Colonic mucosa (tissue), 4 donors: ENCODE measurements at regions of chr9 and their contacts with region 1.

Region 1: GRCh38 chr9:29475471-29475870 is 1902.2 kb upstream of the C9orf72 start:
- DNase-seq: no peak
- H3K4me3 ChIP-seq: no peak overlapping the region
- H3K27ac ChIP-seq: no peak overlapping the region
- H3K4me1 ChIP-seq: no peaks in the 10 kb centered on the region
- H3K27me3 ChIP-seq: no peaks in the 10 kb centered on the region
- CTCF ChIP-seq: no peak

Region 2: DNA sequence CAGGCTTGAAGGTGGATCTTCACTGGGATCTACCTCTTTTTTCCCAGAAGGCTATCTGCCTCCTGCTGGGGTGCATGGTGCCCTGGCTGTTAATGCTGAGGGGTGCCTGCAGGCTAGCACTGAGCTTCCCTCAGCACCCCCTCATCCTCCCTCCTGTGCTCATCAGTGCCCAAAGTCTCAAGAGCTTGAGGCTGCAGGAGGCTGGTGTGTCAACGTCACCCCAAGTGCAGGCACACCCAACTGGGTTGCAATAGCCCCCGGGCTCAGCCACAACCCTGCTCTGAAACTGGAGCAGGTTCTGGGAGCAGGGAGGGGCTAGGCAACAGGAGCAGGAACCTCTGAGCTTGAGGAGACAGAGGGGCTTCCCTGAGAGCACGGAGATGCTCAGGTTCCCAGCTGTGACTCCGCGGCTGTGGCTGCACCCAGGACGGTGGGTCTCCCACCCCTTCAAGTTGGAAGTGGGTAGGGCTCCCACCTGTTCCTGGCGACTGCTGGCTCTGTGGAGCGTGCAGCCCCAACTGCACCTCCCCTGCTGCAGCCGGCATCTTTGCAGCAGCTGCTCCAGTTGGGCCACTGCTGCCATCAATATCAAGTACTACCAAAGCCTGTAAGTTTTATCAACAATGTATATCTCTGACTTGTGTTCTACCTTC is 635.6 kb before region 1 on chr9:
- intact Hi-C with region 1: no loop called
- DNase-seq: no peak
- H3K4me3 ChIP-seq: no peak overlapping the region
- H3K27ac ChIP-seq: no peak overlapping the region
- H3K4me1 ChIP-seq: no peaks in the 10 kb centered on the region
- H3K27me3 ChIP-seq: no peaks in the 10 kb centered on the region
- CTCF ChIP-seq: no peak

Region 3: GRCh38 chr9:29183971-29184370 is 291.5 kb before region 1 on chr9:
- intact Hi-C with region 1: no loop called
- DNase-seq: no peak
- H3K4me3 ChIP-seq: no peak overlapping the region
- H3K27ac ChIP-seq: no peak overlapping the region
- H3K4me1 ChIP-seq: no peaks in the 10 kb centered on the region
- H3K27me3 ChIP-seq: no peaks in the 10 kb centered on the region
- CTCF ChIP-seq: no peak

Region 4: DNA sequence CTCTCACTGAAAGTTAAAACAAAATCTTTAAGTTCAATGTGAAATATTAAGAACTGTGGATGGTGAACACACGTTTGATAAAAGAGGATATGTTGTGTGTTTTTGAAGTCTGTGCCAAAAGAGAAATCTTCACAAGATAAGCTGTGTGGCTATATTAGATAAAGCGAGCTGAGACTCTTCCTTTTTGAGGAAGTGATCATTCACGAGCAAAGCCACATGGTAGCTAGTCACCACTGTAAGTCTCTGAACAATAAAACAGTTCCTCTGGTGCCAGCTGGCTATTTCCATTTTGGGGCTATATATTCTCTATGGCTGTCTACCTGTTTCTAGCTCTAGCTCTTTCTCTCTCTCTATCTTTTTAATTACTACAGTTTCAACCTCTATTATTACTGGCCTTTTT is 53.0 kb before region 1 on chr9:
- intact Hi-C with region 1: loop called (anchors 10 kb)
- DNase-seq: no peak
- H3K4me3 ChIP-seq: no peak overlapping the region
- H3K27ac ChIP-seq: no peak overlapping the region
- H3K4me1 ChIP-seq: no peaks in the 10 kb centered on the region
- H3K27me3 ChIP-seq: no peaks in the 10 kb centered on the region
- CTCF ChIP-seq: no peak

Region 5: GRCh38 chr9:29830821-29831220 is 355.4 kb after region 1 on chr9:
- intact Hi-C with region 1: no loop called
- DNase-seq: peak; percentile 52
- H3K4me3 ChIP-seq: no peak overlapping the region
- H3K27ac ChIP-seq: no peak overlapping the region
- H3K4me1 ChIP-seq: no peaks in the 10 kb centered on the region
- H3K27me3 ChIP-seq: no peaks in the 10 kb centered on the region
- CTCF ChIP-seq: peak; percentile 41